ENCODE measurements at regions of chr5 and their contacts with region 1.

Region 1: GRCh38 chr5:148125641-148126040 is 42.7 kb upstream of the SPINK14 start:
- DNase-seq: no peak
- H3K4me3 ChIP-seq: no peak overlapping the region
- H3K27ac ChIP-seq: no peak overlapping the region
- H3K4me1 ChIP-seq: no peaks in the 10 kb centered on the region
- CTCF ChIP-seq: peak; percentile 26; the same call in 1 of the 2 replicates

Region 2: DNA sequence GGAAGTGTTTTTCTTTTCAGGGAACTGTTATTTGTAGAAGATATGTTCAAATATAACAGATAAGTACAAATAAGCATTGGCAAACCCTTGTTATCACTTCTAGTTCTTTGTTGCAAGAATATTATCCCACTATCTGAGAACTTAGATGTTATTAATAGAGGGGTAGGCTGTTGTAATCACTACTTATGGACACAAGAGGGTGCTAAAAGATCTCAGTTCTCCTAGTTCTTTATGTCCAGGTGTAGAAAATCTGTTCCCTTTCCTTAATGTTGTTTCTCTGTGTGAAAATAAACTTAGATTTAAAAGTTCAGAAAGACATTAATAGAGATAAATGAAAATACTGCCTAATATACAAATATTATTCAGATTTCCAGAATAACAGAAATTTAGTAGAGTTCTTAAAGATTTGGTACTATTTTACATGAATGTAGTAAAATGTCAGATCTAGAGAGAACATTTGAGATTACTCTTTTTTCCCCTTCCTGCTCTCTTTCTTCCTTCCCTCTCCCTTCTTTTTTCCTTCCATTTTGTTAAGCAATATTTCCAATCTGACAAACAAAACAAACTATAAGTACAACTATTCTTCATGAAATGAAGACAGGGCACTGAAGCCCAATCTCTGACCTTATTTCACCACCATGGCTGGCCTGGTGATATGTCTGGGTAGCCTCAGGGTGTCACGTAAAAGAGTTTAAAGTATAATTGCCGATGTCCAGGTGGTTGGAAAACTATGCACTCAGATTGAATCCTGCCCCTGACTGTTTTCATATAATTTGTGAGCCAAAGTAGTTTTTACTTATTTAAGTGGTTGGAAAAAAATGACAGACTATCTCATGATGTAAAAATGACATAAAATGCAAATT is 175.7 kb before region 1 on chr5:
- CTCF ChIA-PET with region 1: no interaction called
- POLR2A ChIA-PET with region 1: no interaction called
- intact Hi-C with region 1: loop called (anchors 10 kb)
- DNase-seq: peak; percentile 51
- H3K4me3 ChIP-seq: no peak overlapping the region
- H3K27ac ChIP-seq: no peak overlapping the region
- H3K4me1 ChIP-seq: no peaks in the 10 kb centered on the region
- CTCF ChIP-seq: peak; percentile 89

Measured in OCI-LY7 (cell line).